CD8-positive, alpha-beta memory T cell (primary cell): ENCODE measurements at regions of chr1 and their contacts with region 1.

Region 1: DNA sequence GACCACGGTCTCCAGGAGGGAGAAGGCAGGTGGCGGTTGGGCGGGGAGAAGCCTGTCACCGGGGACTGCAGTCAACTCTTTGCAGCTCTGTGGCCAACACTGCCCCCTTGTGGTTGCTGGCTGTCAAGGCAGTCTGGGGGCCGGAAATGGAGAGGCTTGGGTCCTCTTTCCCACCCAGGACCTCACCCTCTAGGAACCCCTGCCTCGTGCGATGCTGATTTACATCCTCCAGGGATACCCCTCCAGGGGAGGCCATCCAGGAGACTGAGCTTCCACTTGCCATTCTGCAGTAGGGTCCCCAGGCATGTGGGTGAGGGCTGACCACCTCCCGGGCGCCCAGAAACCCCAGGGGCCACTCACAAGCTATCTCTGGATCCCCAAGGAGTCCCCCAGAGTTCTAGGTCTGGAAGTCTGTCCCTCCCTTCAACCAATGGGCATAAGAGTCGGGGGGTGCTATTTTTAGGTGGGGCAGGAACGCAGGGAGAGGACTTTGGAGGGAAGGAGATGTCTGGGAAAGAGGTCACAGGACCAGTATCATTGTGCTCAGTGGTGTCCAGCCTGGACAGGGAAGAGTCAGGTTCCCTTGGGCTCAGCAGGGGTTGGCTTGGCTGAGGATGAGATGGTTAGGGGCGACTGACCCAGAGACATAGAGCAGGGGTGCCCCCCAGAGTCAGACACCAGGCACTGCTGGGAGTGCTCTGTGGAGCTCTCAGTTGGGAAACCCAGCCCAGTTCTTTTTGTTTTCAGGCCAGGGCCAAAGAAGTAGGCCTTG is 7.1 kb upstream of the GPR61 start:
- DNase-seq: peak; percentile 80 to 93 (median 87)
- H3K4me3 ChIP-seq: peak overlapping the region; percentile 49
- H3K4me3 Mint-ChIP-seq: peak overlapping the region; percentile 76 to 91 (median 86)
- H3K27ac ChIP-seq: peak overlapping the region; percentile 2
- H3K27ac Mint-ChIP-seq: peak overlapping the region; percentile 72 to 97 (median 87)
- H3K4me1 ChIP-seq: peaks cover 30% of the 10 kb centered on the region
- H3K4me1 Mint-ChIP-seq: peaks cover 19 to 23% (median 20%) of the 10 kb centered on the region in 3 donors
- H3K27me3 ChIP-seq: no peaks in the 10 kb centered on the region
- H3K27me3 Mint-ChIP-seq: peaks cover 0 to 2% of the 10 kb centered on the region in 2 donors

Region 2: GRCh38 chr1:109263597-109264398 is 268.8 kb before region 1 on chr1:
- CTCF ChIA-PET with region 1: interaction called, 13 read pairs
- POLR2A ChIA-PET with region 1: no interaction called
- DNase-seq: peak; percentile 60 to 80 (median 67)
- H3K4me3 ChIP-seq: no peak overlapping the region
- H3K4me3 Mint-ChIP-seq: no peak overlapping the region
- H3K27ac ChIP-seq: no peak overlapping the region
- H3K27ac Mint-ChIP-seq: peak overlapping the region in 2 of 8 donors; percentile 68 to 90
- H3K4me1 ChIP-seq: no peaks in the 10 kb centered on the region
- H3K4me1 Mint-ChIP-seq: peaks cover 0 to 4% (median 2%) of the 10 kb centered on the region in 3 donors
- H3K27me3 ChIP-seq: no peaks in the 10 kb centered on the region
- H3K27me3 Mint-ChIP-seq: peaks cover 0 to 2% of the 10 kb centered on the region in 2 donors

Region 3: GRCh38 chr1:109282952-109283747 is 249.4 kb before region 1 on chr1 and contains the start of gene PSRC1:
- CTCF ChIA-PET with region 1: interaction called, 56 read pairs
- POLR2A ChIA-PET with region 1: no interaction called
- DNase-seq: peak; percentile 85 to 93 (median 90)
- H3K4me3 ChIP-seq: peak within 1 kb of the TSS; percentile 65
- H3K4me3 Mint-ChIP-seq: peak within 1 kb of the TSS; percentile 92 to 99 (median 98)
- H3K27ac ChIP-seq: peak within 1 kb of the TSS; percentile 78
- H3K27ac Mint-ChIP-seq: peak within 1 kb of the TSS; percentile 68 to 95 (median 92)
- H3K4me1 ChIP-seq: peaks cover 5% of the 10 kb centered on the region
- H3K4me1 Mint-ChIP-seq: peaks cover 10 to 22% (median 11%) of the 10 kb centered on the region in 3 donors
- H3K27me3 ChIP-seq: no peaks in the 10 kb centered on the region
- H3K27me3 Mint-ChIP-seq: no peaks in the 10 kb centered on the region
- total RNA-seq, gene PSRC1: 5.4 to 5.8 TPM

Region 4: DNA sequence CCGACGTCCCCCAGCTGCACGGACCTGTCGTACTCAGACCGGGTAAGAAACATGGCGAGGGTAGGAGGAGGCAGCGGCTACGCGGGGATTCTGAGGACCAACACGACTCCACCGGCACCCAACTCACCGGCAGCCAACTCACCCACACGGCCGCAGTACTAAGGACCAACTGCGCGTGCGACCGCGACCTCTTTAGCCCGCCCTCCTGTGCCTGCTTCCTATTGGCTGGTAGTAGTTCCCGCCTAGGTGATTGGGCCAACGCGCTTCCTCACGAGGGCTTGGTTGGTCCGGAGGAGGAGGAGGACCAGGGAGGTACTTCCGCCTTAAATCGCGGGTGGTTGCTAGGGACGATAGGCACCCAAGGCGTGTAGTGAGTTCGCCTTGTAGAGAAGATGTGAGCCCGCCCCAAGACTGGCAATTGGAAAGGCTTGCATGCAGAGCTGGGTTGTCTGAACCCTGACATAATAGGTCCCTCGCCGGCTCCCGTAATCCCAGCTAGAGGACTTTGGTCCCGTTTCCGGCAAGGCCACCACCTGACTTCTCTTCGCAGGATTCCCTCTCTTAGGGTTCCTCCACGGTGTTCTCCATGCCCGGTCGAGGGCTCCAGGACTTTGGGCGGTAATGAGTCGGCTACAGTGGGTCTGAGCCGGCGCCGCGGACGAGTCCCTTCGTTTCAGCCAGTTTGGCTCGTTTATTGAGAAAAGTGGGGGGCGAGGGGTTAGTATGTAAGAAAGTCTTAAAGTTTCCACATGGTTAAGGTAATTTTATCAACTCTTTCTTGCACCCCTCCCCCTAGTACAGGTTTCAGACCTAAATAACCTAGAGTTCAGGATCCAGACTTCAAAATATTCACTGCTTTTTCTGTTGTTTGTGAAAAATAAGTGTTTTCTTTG is 106.0 kb before region 1 on chr1 and contains the start of gene PSMA5:
- CTCF ChIA-PET with region 1: interaction called, 17 read pairs
- POLR2A ChIA-PET with region 1: interaction called, 13 read pairs
- DNase-seq: peak; percentile 89 to 98 (median 94)
- H3K4me3 ChIP-seq: peak within 1 kb of the TSS; percentile 85
- H3K4me3 Mint-ChIP-seq: peak within 1 kb of the TSS; percentile 96 to 99 (median 98)
- H3K27ac ChIP-seq: peak within 1 kb of the TSS; percentile 94
- H3K27ac Mint-ChIP-seq: peak within 1 kb of the TSS; percentile 96 to 100 (median 99)
- H3K4me1 ChIP-seq: peaks cover 45% of the 10 kb centered on the region
- H3K4me1 Mint-ChIP-seq: peaks cover 35 to 47% (median 47%) of the 10 kb centered on the region in 3 donors
- H3K27me3 ChIP-seq: no peaks in the 10 kb centered on the region
- H3K27me3 Mint-ChIP-seq: no peaks in the 10 kb centered on the region
- total RNA-seq, gene PSMA5: 207 to 238 TPM

Region 5: GRCh38 chr1:109493805-109494539 is 38.6 kb before region 1 on chr1 and contains the start of gene CYB561D1:
- CTCF ChIA-PET with region 1: interaction called, 1,339 read pairs
- POLR2A ChIA-PET with region 1: interaction called, 20 read pairs
- DNase-seq: peak; percentile 85 to 92 (median 88)
- H3K4me3 ChIP-seq: peak within 1 kb of the TSS; percentile 87
- H3K4me3 Mint-ChIP-seq: peak within 1 kb of the TSS; percentile 92 to 98 (median 95)
- H3K27ac ChIP-seq: peak within 1 kb of the TSS; percentile 51
- H3K27ac Mint-ChIP-seq: peak within 1 kb of the TSS; percentile 80 to 97 (median 90)
- H3K4me1 ChIP-seq: peaks cover 54% of the 10 kb centered on the region
- H3K4me1 Mint-ChIP-seq: peaks cover 41 to 61% (median 52%) of the 10 kb centered on the region in 3 donors
- H3K27me3 ChIP-seq: no peaks in the 10 kb centered on the region
- H3K27me3 Mint-ChIP-seq: no peaks in the 10 kb centered on the region
- total RNA-seq, gene CYB561D1: 9.9 to 10.6 TPM

Region 6: DNA sequence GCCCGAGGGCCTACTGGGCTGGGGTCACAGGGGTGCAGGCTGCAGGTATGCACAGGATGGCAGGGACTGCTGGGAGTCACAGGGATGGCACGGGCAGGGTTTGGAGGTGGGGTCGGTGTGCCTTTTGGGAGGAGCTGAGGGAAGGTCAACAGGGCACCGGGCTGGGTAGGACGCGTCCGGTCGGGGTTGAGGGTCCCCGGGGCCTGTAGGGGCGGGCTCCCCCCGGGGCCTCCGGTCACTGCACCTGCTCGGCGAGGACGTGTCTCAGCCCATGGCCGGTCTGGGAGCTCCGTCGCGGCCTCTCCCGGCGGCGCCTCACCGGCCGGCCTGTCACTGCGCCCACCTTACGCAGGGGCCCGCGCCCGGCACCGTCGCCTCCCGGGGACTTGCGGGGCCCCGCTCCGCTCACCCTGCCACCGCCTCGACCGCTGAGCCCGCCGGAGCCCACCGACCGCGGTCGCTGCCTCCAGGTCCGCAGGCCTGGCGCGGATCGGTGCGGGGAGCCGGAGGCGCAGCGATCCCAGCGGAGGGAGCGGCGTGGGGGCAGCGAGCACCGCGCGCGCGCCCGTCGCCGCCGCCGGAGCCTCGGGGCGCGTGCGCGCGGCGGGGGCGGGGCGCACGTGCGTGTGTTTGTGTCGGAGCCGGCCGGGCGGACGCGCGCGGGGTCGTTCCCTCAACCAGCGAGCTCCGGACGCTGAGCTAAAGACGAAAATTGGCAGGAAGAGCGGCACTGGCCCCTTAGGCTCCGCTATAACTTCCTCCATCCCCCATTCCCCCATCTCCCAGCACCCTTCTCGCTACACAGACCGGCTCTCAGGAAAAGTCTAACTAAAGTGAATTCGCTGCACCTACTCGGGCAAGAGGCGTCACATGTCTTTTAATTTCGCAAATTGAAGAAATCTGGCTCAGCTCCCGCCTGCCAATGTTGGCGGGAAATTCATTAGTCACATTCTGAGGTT is 23.1 kb before region 1 on chr1 and contains the start of gene AMIGO1:
- CTCF ChIA-PET with region 1: interaction called, 1,339 read pairs
- POLR2A ChIA-PET with region 1: interaction called, 15 read pairs
- DNase-seq: peak; percentile 47 to 77 (median 63)
- H3K4me3 ChIP-seq: peak within 1 kb of the TSS; percentile 78
- H3K4me3 Mint-ChIP-seq: peak within 1 kb of the TSS; percentile 95 to 97 (median 95)
- H3K27ac ChIP-seq: no peak within 1 kb of the TSS
- H3K27ac Mint-ChIP-seq: peak within 1 kb of the TSS; percentile 71 to 99 (median 94)
- H3K4me1 ChIP-seq: peaks cover 56% of the 10 kb centered on the region
- H3K4me1 Mint-ChIP-seq: peaks cover 53 to 62% (median 60%) of the 10 kb centered on the region in 3 donors
- H3K27me3 ChIP-seq: no peaks in the 10 kb centered on the region
- H3K27me3 Mint-ChIP-seq: peaks cover 0 to 8% of the 10 kb centered on the region in 2 donors
- total RNA-seq, gene AMIGO1: 4.0 to 4.9 TPM

Region 7: DNA sequence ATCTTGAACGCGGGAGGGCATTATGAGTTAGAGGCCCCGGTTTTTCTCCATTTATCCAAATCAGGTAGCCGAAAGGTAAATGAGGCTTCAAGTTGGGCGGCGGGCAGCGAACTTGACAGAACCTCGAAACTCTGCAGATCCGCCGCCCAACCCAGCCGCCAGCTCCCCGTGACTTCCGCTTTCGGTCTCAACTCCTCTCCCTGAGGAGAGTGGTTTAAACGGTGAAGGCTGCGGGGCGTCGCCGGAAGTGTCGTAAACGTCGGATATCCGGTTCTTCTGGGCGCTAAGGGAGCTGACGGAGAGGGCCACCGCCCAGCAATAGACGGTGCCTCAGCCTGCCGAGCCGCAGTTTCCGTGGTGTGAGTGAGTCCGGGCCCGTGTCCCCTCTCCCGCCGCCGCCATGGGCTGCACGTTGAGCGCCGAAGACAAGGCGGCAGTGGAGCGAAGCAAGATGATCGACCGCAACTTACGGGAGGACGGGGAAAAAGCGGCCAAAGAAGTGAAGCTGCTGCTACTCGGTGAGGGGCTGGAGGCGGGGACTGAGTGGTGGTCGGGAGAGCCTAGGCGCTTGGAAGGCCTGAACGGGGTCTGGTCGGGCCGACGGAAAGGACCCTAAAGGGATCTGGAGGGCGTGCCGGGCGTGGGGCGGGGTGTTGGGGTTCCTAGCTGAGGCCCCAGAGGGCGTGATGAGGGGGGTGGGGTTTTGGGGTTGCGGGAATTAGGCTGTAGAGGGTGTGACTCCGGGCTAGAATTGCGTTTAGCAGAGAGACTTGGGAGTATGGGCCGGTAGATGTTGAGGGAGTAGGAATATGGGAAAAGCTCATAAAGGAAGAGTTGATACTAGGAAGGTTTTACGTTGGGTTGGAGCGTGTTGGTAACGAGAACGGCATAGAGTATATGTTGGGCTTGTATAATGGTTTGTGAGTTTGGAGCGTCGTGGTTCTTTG is 16.0 kb after region 1 on chr1 and contains the start of gene GNAI3:
- CTCF ChIA-PET with region 1: interaction called, 47 read pairs
- POLR2A ChIA-PET with region 1: interaction called, 4 read pairs
- DNase-seq: peak; percentile 93 to 98 (median 95)
- H3K4me3 ChIP-seq: peak within 1 kb of the TSS; percentile 97
- H3K4me3 Mint-ChIP-seq: peak within 1 kb of the TSS; percentile 88 to 100 (median 98)
- H3K27ac ChIP-seq: peak within 1 kb of the TSS; percentile 98
- H3K27ac Mint-ChIP-seq: peak within 1 kb of the TSS; percentile 95 to 100 (median 99)
- H3K4me1 ChIP-seq: peaks cover 37% of the 10 kb centered on the region
- H3K4me1 Mint-ChIP-seq: peaks cover 58 to 69% (median 65%) of the 10 kb centered on the region in 3 donors
- H3K27me3 ChIP-seq: no peaks in the 10 kb centered on the region
- H3K27me3 Mint-ChIP-seq: no peaks in the 10 kb centered on the region
- total RNA-seq, gene GNAI3: 9.8 to 9.9 TPM

Region 8: DNA sequence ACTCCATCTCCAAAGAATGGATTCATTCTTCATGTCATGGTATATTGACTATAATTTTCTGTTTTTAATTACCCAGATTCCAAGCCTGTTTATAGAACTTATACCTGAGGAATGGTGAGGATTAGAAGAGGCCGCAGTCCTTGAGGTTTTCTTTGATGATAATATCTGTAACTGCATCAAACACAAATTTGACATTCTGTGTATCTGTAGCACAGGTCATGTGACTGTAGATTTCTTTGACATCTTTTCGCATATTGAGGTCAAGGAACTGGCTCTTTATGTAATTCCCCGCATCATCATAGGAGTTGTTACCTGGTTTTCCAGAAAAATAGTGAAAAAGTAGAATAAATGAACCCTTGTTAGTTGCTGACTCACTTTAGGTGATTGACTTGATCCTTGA is 70.7 kb after region 1 on chr1:
- CTCF ChIA-PET with region 1: no interaction called
- POLR2A ChIA-PET with region 1: no interaction called
- DNase-seq: no peak
- H3K4me3 ChIP-seq: no peak overlapping the region
- H3K4me3 Mint-ChIP-seq: no peak overlapping the region
- H3K27ac ChIP-seq: no peak overlapping the region
- H3K27ac Mint-ChIP-seq: peak overlapping the region in 3 of 8 donors; percentile 14 to 77 (median 18)
- H3K4me1 ChIP-seq: peaks cover 11% of the 10 kb centered on the region
- H3K4me1 Mint-ChIP-seq: peaks cover 3 to 12% (median 10%) of the 10 kb centered on the region in 3 donors
- H3K27me3 ChIP-seq: no peaks in the 10 kb centered on the region
- H3K27me3 Mint-ChIP-seq: no peaks in the 10 kb centered on the region